Right ventricle myocardium superior (tissue), 1 donor: ENCODE measurements at regions of chr4 and their contacts with region 1.

Region 1: DNA sequence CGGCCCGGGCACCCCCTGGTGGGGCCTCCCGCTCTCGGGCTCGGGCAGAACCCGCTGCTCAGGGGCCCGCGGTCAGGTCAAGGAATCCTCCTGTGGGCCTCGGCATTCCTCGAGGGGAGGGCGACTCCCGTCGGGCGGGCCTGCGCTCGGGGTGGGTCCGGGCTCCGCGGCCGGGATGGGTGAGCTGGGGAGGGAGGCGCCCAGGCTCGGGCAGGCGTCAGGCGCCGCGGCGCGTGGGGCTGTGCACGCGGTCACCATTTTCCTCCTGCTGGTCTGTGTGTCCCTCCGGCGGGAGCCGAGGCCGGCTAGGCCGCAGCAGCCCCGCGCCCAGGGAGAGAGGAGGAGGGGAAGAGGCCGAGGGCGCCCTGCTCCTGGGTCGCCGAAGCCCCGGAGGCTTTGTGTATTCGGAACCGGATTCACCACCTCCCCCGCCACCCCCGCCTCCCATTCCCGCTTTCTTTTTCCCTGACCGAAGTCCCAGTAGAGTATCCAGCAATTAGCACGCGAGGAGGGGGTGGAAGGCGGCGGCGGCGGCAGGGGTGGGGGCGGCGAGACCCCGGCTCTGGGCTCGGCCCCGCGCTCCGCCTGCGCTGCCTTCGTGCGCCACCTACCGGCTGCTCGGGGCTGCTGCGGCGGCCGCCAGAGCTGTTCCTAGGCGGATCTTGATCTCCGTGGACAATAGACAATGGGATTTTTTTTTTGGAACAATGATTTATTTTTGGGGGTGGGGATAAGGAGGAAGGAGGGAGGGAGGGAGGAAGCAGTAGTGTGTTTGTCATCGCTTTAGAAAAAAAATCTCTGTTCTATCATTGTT is 99.0 kb upstream of the MAML3 start:
- DNase-seq: peak; percentile 87
- ATAC-seq: peak; percentile 94

Region 2: DNA sequence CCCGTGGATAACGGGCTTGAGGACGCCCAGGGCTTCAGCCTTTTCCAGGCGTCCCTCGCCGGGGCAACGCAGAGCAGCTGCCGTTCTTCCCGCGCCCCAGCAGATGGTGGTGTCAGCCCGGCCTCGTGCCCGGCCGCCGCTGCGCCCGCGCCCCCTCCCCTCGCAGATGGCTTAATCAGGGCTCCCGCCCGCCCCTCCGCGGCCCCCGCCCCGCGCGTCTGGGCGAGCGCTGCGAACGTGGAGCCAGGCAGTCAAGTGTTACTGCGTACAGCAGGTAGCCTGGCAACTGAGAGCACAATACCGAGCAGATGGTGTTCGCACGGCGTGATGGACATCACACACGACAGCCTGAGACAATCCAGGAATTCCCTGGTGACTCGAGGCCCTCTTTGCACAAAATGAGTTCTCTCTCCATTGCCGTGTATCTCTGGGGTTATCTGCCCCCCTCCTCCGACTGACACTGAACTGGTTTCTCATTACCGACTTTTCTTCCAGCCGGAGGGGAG is 518.0 kb before region 1 on chr4:
- intact Hi-C with region 1: loop called (anchors 5 kb)
- DNase-seq: peak; percentile 93
- ATAC-seq: peak; percentile 96

Region 3: DNA sequence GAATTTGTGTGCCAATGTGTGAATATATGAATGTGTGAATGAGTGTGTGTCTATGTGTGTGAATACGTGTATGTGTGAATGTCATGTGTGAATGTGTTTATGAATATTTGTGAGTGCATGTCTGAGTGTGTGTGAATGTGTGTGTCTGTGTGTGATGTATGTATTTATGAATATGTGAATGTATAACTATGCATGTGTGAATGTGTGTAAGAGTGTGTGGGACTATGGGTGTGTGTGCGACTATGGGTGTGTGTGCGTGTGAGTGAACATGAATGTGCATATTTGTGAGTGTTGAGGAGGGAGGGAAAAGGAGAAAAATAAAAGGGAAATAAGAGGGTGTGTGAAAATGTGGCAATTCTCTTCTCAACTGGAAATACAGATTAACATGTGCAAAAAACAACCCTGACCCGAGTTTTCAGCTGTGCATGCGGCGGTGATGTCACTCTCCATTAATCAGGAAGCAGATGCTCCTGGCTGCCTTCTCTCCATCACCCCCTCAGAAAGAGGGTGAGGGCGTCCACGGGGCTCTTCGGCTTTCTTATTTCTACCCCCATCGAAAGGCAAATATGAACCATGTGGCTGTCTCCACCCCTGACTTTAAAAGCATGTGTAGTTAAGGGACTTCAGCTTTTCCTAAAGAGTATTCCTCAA is 318.8 kb before region 1 on chr4:
- intact Hi-C with region 1: no loop called
- DNase-seq: no peak
- ATAC-seq: peak; percentile 29

Region 4: GRCh38 chr4:140012688-140013486 is 240.1 kb before region 1 on chr4:
- intact Hi-C with region 1: loop called (anchors 5 kb)
- DNase-seq: peak; percentile 53
- ATAC-seq: peak; percentile 97

Region 5: DNA sequence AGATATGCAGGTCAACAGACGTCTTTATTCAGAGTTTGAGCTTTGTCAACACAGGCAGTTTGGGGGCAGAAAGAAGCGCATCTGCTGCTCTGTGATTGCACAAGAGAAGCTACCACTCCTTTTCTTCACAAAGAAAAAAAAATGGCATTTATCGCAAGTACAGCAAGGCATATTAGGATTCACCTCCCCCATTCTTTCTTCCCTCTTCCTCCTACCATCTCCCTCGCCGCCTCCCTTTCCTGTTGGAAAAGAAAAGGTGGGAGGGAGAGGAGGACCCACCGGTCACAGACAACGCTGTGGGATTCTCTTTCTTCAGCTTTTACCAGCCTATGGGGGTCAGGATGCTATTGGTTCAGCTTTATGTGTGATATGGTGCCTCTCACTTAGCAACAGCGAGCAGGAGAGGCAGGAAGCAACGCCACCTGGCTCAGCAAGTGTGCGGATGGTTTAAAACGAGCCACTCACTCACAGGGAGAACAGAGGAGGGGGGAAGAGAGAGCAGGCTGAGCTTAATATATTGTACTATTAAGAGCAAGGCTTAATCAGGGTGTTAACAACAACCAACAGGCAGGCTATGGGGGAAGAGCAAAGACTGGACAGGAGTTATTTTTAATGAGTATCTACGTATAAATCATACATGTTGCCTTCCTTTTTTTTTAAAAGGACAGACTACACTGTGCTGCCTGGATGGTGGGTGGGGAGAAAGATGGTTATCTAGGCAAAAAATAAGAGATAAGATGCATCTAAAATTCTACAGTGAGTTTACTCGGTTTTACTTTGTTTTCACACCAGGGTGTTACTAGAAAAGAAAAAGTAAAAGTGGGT is 203.7 kb before region 1 on chr4:
- intact Hi-C with region 1: loop called (anchors 5 kb)
- DNase-seq: peak; percentile 46
- ATAC-seq: peak; percentile 77